PC-3 (cell line): ENCODE measurements at regions of chr4 and their contacts with region 1.

Region 1: GRCh38 chr4:88659055-88659889 is 38.4 kb downstream of the NAP1L5 start:
- DNase-seq: peak; percentile 77
- ATAC-seq: peak; percentile 78
- H3K4me3 ChIP-seq: peak overlapping the region; percentile 30; the same call in 1 of the 2 replicates
- H3K27ac ChIP-seq: peak overlapping the region; percentile 99
- H3K4me1 ChIP-seq: peaks cover 39% of the 10 kb centered on the region
- H3K27me3 ChIP-seq: no peaks in the 10 kb centered on the region
- CTCF ChIP-seq: peak; percentile 83

Region 2: GRCh38 chr4:88240297-88240714 is 419.0 kb before region 1 on chr4:
- CTCF ChIA-PET with region 1: no interaction called
- POLR2A ChIA-PET with region 1: no interaction called
- intact Hi-C with region 1: no loop called
- DNase-seq: no peak
- ATAC-seq: no peak
- H3K4me3 ChIP-seq: no peak overlapping the region
- H3K27ac ChIP-seq: no peak overlapping the region
- H3K4me1 ChIP-seq: no peaks in the 10 kb centered on the region
- H3K27me3 ChIP-seq: no peaks in the 10 kb centered on the region
- CTCF ChIP-seq: no peak

Region 3: DNA sequence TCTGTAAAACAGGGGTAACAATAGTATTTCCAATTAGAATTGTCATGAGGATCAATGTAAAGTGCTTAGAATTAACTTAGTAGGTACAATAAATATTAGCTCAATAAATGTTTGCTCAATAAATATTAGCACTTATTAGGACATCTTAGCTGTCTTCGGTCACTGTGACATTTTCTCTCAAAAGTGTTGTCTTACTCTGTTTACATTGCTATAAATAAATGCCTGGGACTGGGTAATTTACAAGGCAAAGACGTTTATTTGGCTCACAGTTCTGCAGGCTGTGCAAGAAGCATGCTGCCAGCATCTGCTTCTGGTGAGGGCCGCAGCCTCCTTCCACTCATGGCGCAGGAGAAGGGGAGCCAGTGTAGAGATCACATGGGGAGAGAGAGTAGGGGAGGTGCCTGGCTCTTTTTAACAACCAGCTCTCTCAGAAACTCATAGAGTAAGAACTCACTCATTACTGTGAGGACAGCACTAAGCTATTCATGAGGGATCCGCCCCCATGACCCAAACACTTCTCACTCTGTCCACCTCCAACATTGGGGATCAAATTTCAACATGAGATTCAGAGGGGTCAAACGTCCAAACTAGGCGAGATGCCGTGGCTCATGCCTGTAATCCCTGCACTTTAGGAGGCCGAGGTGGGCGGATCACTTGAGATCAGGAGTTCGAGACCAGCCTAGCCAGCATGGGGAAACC is 324.2 kb before region 1 on chr4:
- CTCF ChIA-PET with region 1: no interaction called
- POLR2A ChIA-PET with region 1: no interaction called
- intact Hi-C with region 1: no loop called
- DNase-seq: peak; percentile 16
- ATAC-seq: peak; percentile 56
- H3K4me3 ChIP-seq: no peak overlapping the region
- H3K27ac ChIP-seq: peak overlapping the region; percentile 24
- H3K4me1 ChIP-seq: peaks cover 17% of the 10 kb centered on the region; the same call in 1 of the 2 replicates
- H3K27me3 ChIP-seq: no peaks in the 10 kb centered on the region
- CTCF ChIP-seq: no peak

Region 4: GRCh38 chr4:88528861-88529260 is 130.4 kb before region 1 on chr4:
- CTCF ChIA-PET with region 1: interaction called, 5 read pairs
- POLR2A ChIA-PET with region 1: no interaction called
- intact Hi-C with region 1: loop called (anchors 1 kb)
- DNase-seq: no peak
- ATAC-seq: no peak
- H3K4me3 ChIP-seq: no peak overlapping the region
- H3K27ac ChIP-seq: no peak overlapping the region
- H3K4me1 ChIP-seq: peaks cover 40% of the 10 kb centered on the region
- H3K27me3 ChIP-seq: no peaks in the 10 kb centered on the region
- CTCF ChIP-seq: peak; percentile 26; the same call in 1 of the 2 replicates

Region 5: GRCh38 chr4:88591787-88592599 is 67.3 kb before region 1 on chr4 and contains the start of gene HERC3:
- CTCF ChIA-PET with region 1: interaction called, 6 read pairs
- POLR2A ChIA-PET with region 1: interaction called, 3 read pairs
- intact Hi-C with region 1: loop called (anchors 1 kb)
- DNase-seq: peak; percentile 83
- ATAC-seq: peak; percentile 94
- H3K4me3 ChIP-seq: peak within 1 kb of the TSS; percentile 71
- H3K27ac ChIP-seq: no peak within 1 kb of the TSS
- H3K4me1 ChIP-seq: peaks cover 7% of the 10 kb centered on the region
- H3K27me3 ChIP-seq: no peaks in the 10 kb centered on the region
- CTCF ChIP-seq: no peak
- total RNA-seq, gene HERC3: 5.2 and 5.4 TPM in 2 replicates

Region 6: GRCh38 chr4:88880501-88881226 is 221.4 kb after region 1 on chr4:
- CTCF ChIA-PET with region 1: no interaction called
- POLR2A ChIA-PET with region 1: no interaction called
- intact Hi-C with region 1: no loop called
- DNase-seq: no peak
- ATAC-seq: no peak
- H3K4me3 ChIP-seq: no peak overlapping the region
- H3K27ac ChIP-seq: no peak overlapping the region
- H3K4me1 ChIP-seq: no peaks in the 10 kb centered on the region
- H3K27me3 ChIP-seq: no peaks in the 10 kb centered on the region
- CTCF ChIP-seq: no peak